ENCODE measurements at regions of chr3 and their contacts with region 1.

Region 1: GRCh38 chr3:124995460-124995994 is 60.3 kb downstream of the HEG1 start:
- DNase-seq: peak; percentile 62
- H3K4me3 Mint-ChIP-seq: no peak overlapping the region
- H3K27ac Mint-ChIP-seq: no peak overlapping the region
- H3K4me1 Mint-ChIP-seq: no peaks in the 10 kb centered on the region
- H3K27me3 Mint-ChIP-seq: no peaks in the 10 kb centered on the region
- CTCF ChIP-seq: peak; percentile 82

Region 2: GRCh38 chr3:125150525-125151441 is 155.3 kb after region 1 on chr3:
- CTCF ChIA-PET with region 1: interaction called, 3 read pairs
- POLR2A ChIA-PET with region 1: no interaction called
- intact Hi-C with region 1: loop called (anchors 1 kb)
- DNase-seq: peak; percentile 81
- H3K4me3 Mint-ChIP-seq: no peak overlapping the region
- H3K27ac Mint-ChIP-seq: no peak overlapping the region
- H3K4me1 Mint-ChIP-seq: no peaks in the 10 kb centered on the region
- H3K27me3 Mint-ChIP-seq: no peaks in the 10 kb centered on the region
- CTCF ChIP-seq: peak; percentile 55

Region 3: DNA sequence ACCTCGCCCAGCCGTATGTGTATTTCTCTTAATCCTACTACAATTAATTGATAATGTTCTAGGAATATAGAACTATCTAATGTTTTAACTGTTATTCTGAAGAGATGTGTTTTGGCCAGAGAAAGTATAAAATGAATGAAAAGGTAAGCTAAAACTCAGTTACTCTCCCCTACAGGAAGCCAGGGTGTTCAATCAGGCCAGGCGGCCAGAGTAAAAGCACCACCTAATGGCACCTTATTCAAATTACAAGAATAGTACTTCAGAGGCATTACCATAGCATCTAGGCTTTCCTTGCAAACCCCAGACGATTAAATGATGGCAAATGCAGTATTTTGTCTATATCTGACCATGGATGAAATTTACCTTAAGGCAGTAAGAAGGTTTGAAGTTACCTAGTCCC is 206.7 kb after region 1 on chr3:
- CTCF ChIA-PET with region 1: interaction called, 4 read pairs
- POLR2A ChIA-PET with region 1: no interaction called
- intact Hi-C with region 1: loop called (anchors 5 kb)
- DNase-seq: peak; percentile 33
- H3K4me3 Mint-ChIP-seq: no peak overlapping the region
- H3K27ac Mint-ChIP-seq: no peak overlapping the region
- H3K4me1 Mint-ChIP-seq: no peaks in the 10 kb centered on the region
- H3K27me3 Mint-ChIP-seq: no peaks in the 10 kb centered on the region
- CTCF ChIP-seq: no peak

Region 4: DNA sequence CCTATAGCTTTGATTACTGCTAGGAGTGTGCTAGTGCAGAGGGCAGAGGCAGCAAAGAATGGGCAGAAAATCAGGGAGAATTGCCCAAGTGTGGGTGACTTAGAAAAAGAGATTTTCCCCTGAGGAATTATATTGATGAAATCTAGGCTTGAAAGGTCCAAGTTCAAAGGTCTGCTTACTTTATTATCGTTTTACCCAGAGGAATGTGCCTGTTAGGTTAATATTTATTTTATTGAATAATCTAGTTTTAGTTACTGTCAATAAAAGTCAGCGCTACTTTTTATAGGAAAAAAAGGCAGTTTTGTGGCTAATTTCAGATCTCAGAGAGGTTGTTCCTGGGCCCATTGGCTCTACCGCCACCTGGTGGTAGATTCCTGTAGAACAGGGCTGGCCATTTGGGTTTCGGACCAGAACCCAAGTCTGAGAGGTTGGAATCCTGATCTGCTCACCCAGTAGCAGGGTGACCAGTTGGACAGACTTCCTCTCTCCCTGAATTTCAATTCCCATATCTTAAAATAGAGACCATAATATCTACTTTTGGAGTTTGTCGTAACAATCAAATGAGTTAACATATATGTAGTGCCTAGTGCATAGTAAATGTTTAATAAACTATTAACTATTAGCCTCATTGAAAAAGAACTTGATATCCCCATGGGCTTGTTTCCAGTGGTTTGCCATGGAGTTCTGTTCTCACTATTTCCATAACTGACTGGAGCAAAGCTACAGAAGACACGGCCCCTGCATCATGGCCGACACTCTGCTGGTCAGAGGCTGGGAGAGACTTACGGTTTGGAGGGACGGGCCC is 442.3 kb after region 1 on chr3:
- CTCF ChIA-PET with region 1: interaction called, 123 read pairs
- POLR2A ChIA-PET with region 1: interaction called, 4 read pairs
- intact Hi-C with region 1: loop called (anchors 1 kb)
- DNase-seq: peak; percentile 59
- H3K4me3 Mint-ChIP-seq: no peak overlapping the region
- H3K27ac Mint-ChIP-seq: no peak overlapping the region
- H3K4me1 Mint-ChIP-seq: peaks cover 14% of the 10 kb centered on the region
- H3K27me3 Mint-ChIP-seq: no peaks in the 10 kb centered on the region
- CTCF ChIP-seq: peak; percentile 90